Activated CD4-positive, alpha-beta memory T cell treated with anti-CD3 and anti-CD28 coated beads for 36 hours (primary cell): ENCODE measurements at regions of chr11 and their contacts with region 1.

Region 1: DNA sequence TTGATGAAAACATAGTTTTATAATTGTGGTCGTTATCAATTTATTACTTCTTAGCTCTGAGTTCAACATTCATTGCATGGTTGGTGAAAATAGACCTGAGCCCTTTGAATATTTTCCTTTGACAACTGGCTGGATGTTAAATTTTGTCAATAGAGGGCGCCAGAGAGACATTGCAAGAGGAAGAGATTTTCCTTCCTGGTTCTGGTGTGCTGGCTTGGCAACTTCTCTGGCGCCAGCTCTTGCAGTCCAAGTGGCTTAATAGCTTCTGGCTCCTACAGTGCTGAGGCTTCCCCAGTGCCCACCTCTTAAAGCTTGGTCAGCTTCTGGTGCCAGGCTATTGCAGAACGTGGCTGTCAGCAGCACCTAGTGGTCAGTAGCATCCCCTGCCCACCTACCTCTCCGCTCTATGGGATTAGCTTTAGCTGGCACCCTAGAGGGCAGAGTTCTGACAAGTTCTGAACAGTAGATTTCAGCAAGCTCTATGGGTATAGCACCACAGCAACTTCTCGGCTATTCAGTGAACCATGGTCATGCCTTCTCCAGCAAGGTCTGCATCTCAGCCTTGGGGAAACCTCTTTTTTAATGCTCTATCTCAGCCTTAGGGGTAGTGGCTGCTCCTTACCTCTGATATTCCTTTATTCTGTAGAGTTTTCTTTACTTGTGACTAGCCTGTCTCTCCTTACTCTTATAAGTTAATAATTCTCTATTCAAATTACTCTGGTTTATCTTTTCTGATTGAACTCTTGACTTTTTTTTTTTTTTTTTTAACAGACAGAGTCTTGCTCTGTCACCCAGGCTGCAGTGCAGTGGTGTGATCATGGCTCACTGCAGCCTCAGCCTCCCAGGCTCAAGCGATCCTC is 59.4 kb downstream of the ACER3 start:
- DNase-seq: peak; percentile 56
- H3K4me3 Mint-ChIP-seq: no peak overlapping the region
- H3K27ac Mint-ChIP-seq: no peak overlapping the region
- H3K4me1 Mint-ChIP-seq: peaks cover 4% of the 10 kb centered on the region
- H3K27me3 Mint-ChIP-seq: no peaks in the 10 kb centered on the region

Region 2: GRCh38 chr11:76721755-76722677 is 198.1 kb before region 1 on chr11:
- CTCF ChIA-PET with region 1: interaction called, 18 read pairs
- POLR2A ChIA-PET with region 1: no interaction called
- intact Hi-C with region 1: no loop called
- DNase-seq: peak; percentile 85
- H3K4me3 Mint-ChIP-seq: no peak overlapping the region
- H3K27ac Mint-ChIP-seq: no peak overlapping the region
- H3K4me1 Mint-ChIP-seq: peaks cover 9% of the 10 kb centered on the region
- H3K27me3 Mint-ChIP-seq: peaks cover 10% of the 10 kb centered on the region

Region 3: DNA sequence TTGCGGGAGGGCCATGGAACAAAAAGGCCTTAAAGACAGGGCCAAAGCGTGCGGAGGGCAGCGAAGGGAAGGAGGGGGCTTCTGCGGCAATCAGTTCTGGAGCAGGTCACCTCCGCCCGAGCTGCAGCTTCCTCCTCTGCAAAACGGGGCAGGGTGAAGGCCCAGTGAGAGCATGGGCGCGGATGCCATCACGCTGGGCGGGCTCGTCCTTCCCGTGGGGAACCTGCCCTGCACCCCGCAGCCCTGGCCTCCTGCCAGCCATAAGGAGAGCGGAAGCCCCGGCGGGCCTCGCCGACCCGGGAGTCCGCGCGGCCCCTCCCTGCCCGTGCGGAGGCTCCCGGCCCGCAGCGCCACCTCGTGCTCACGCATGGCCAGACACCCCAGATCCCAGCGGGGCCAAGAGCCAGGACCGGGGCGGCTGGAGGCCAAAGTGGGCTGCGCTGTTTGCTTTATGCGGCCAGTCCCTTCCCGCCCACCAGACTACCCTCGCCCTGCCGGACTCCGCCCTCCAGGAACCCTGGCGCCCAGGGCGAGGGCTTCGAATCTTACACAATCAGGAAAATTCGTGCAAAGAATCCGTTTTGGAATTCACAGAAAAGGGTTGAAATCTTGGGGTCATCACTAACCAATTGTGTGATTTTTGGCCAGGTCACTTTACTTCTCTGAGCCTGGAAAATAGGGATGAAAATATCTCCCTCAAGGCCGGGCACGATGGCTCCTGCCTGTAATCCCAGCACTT is 120.9 kb before region 1 on chr11:
- CTCF ChIA-PET with region 1: interaction called, 58 read pairs
- POLR2A ChIA-PET with region 1: no interaction called
- intact Hi-C with region 1: no loop called
- DNase-seq: peak; percentile 84
- H3K4me3 Mint-ChIP-seq: no peak overlapping the region
- H3K27ac Mint-ChIP-seq: no peak overlapping the region
- H3K4me1 Mint-ChIP-seq: peaks cover 17% of the 10 kb centered on the region
- H3K27me3 Mint-ChIP-seq: peaks cover 2% of the 10 kb centered on the region

Region 4: DNA sequence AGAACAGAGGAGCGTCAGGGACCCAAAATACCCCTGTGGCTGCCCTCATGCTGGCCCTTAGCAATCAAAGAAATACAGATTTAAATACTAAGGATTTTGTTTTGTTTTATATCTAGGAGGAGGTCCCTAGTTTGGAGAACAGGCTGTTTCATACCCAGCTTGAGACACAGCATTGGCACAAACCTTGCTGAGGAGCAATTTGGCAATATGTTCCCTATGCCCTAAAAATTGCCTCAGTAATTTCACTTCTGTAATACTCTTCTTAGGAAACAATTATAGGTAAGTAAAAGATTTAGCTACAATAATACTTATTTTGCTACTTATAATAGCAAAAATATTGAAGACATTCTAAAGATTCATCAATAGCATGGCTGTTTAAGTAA is 99.9 kb before region 1 on chr11:
- CTCF ChIA-PET with region 1: interaction called, 13 read pairs
- POLR2A ChIA-PET with region 1: no interaction called
- intact Hi-C with region 1: no loop called
- DNase-seq: no peak
- H3K4me3 Mint-ChIP-seq: no peak overlapping the region
- H3K27ac Mint-ChIP-seq: no peak overlapping the region
- H3K4me1 Mint-ChIP-seq: peaks cover 9% of the 10 kb centered on the region
- H3K27me3 Mint-ChIP-seq: peaks cover 4% of the 10 kb centered on the region

Region 5: DNA sequence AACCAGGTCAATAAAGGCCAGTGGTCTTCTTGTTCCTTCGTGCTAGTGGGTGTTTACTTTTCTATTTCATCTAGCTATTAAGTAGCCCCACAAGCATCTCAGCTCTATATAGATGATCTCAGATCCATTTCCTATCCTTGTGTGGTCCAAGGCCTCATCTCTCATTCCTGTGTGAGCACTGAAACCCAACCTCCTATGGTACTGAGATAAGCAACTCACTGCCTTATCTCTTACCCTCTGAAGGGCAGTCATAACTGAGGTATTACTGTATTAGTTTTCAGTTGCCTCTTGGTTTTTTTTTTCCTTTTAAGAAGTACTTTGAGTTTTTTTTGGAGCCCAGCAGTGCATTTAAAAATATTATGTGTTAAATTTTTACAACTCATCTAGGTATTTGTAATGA is 31.1 kb before region 1 on chr11:
- CTCF ChIA-PET with region 1: interaction called, 11 read pairs
- POLR2A ChIA-PET with region 1: no interaction called
- intact Hi-C with region 1: no loop called
- DNase-seq: no peak
- H3K4me3 Mint-ChIP-seq: no peak overlapping the region
- H3K27ac Mint-ChIP-seq: no peak overlapping the region
- H3K4me1 Mint-ChIP-seq: peaks cover 10% of the 10 kb centered on the region
- H3K27me3 Mint-ChIP-seq: no peaks in the 10 kb centered on the region

Region 6: DNA sequence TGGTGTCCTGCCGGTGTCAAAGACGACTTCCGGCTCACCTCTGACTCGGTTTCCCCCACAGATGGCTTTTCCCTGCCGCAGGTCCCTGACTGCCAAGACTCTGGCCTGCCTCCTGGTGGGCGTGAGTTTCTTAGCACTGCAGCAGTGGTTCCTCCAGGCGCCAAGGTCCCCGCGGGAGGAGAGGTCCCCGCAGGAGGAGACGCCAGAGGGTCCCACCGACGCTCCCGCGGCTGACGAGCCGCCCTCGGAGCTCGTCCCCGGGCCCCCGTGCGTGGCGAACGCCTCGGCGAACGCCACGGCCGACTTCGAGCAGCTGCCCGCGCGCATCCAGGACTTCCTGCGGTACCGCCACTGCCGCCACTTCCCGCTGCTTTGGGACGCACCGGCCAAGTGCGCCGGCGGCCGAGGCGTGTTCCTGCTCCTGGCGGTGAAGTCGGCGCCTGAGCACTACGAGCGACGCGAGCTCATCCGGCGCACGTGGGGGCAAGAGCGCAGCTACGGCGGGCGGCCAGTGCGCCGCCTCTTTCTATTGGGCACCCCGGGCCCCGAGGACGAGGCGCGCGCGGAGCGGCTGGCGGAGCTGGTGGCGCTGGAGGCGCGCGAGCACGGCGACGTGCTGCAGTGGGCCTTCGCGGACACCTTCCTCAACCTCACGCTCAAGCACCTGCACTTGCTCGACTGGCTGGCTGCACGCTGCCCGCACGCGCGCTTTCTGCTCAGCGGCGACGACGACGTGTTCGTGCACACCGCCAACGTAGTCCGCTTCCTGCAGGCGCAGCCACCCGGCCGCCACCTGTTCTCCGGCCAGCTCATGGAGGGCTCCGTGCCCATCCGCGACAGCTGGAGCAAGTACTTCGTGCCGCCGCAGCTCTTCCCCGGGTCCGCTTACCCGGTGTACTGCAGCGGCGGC is 119.6 kb after region 1 on chr11:
- CTCF ChIA-PET with region 1: interaction called, 10 read pairs
- POLR2A ChIA-PET with region 1: no interaction called
- intact Hi-C with region 1: no loop called
- DNase-seq: peak; percentile 40
- H3K4me3 Mint-ChIP-seq: no peak overlapping the region
- H3K27ac Mint-ChIP-seq: no peak overlapping the region
- H3K4me1 Mint-ChIP-seq: peaks cover 8% of the 10 kb centered on the region
- H3K27me3 Mint-ChIP-seq: peaks cover 37% of the 10 kb centered on the region

Region 7: GRCh38 chr11:77073328-77074001 is 153.3 kb after region 1 on chr11:
- CTCF ChIA-PET with region 1: no interaction called
- POLR2A ChIA-PET with region 1: no interaction called
- intact Hi-C with region 1: no loop called
- DNase-seq: no peak
- H3K4me3 Mint-ChIP-seq: no peak overlapping the region
- H3K27ac Mint-ChIP-seq: no peak overlapping the region
- H3K4me1 Mint-ChIP-seq: peaks cover 11% of the 10 kb centered on the region
- H3K27me3 Mint-ChIP-seq: no peaks in the 10 kb centered on the region

Region 8: GRCh38 chr11:77091146-77091940 is 171.2 kb after region 1 on chr11:
- CTCF ChIA-PET with region 1: interaction called, 60 read pairs
- POLR2A ChIA-PET with region 1: no interaction called
- intact Hi-C with region 1: loop called (anchors 5 kb)
- DNase-seq: peak; percentile 86
- H3K4me3 Mint-ChIP-seq: no peak overlapping the region
- H3K27ac Mint-ChIP-seq: no peak overlapping the region
- H3K4me1 Mint-ChIP-seq: peaks cover 2% of the 10 kb centered on the region
- H3K27me3 Mint-ChIP-seq: no peaks in the 10 kb centered on the region